ENCODE measurements at regions of chr5 and their contacts with region 1.

Region 1: DNA sequence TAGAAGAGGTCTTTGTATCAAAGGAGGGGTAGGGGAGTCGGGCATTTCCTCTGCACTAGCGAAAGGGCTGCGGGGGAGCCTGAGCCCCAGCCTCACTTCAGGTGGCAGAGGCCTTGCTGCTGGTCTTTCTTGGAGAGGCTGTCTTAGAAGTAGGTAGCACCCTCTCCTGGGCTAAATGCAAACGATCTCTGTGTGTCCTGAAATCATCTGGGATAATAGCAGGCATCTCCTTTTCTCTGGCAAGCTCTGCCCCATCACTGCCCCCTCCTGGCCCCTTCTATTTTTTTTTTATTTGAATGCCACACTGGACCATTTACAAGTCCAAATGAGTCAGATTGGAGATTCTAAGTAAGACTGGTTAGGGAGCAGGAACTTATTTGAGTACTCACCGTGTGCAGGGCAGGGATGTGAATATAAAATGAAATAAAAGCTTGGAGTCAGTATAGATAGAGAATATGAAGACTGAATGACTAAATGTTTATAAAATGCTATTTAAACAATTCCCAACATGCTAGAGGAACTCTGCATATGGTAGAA is 137.1 kb downstream of the FGF1 start:
- DNase-seq: peak; percentile 53
- ATAC-seq: peak; percentile 90 to 92

Region 2: GRCh38 chr5:141992349-141992963 is 556.4 kb before region 1 on chr5:
- intact Hi-C with region 1: loop called in 1 of 2 experiments (anchors 10 kb)
- DNase-seq: peak; percentile 75
- ATAC-seq: peak; percentile 71 to 74

Region 3: DNA sequence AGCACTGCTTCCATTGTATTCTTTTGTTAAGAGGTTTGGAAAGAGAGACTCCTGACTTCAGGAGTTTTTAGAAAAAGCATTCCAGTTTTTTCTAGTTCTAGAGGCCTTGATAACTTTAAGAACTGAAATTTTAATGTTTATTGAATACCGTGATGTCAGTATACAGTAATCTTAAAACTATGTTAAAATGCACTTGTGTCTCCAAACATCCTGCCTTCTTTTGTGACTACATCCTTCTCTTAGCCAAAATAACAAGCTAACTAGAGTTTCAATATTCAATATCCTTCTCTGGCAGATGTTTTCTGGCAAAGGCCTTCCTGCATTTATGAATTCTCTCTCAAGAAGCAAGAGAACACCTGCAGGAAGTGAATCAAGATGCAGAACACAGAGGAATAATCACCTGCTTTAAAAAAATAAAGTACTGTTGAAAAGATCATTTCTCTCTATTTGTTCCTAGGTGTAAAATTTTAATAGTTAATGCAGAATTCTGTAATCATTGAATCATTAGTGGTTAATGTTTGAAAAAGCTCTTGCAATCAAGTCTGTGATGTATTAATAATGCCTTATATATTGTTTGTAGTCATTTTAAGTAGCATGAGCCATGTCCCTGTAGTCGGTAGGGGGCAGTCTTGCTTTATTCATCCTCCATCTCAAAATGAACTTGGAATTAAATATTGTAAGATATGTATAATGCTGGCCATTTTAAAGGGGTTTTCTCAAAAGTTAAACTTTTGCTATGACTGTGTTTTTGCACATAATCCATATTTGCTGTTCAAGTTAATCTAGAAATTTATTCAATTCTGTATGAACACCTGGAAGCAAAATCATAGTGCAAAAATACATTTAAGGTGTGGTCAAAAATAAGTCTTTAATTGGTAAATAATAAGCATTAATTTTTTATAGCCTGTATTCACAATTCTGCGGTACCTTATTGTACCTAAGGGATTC is 397.1 kb before region 1 on chr5:
- intact Hi-C with region 1: loop called (anchors 2 to 5 kb)
- DNase-seq: peak; percentile 44
- ATAC-seq: peak; percentile 60 to 61

Region 4: GRCh38 chr5:142263346-142263745 is 285.5 kb before region 1 on chr5:
- intact Hi-C with region 1: no loop called
- DNase-seq: no peak
- ATAC-seq: no peak

Region 5: DNA sequence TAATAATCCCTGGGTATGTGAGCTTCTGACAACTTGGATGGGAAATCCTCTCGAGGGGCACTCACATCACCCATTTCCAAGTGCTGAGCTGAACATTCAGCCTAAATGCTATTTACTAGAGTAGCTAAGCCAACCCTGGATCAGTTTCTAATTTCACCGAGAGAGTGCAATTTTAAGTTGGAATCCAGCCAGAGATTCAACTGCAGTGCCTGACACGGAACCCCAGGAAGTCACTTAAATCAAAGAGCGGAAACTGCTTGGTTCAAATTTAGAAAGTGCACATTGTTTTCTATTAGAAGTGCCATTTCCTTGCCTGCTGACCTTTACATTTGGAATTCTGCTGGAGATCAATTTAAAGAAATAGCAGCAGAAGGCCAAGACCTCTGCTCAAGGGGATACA is 232.8 kb before region 1 on chr5:
- intact Hi-C with region 1: loop called (anchors 5 to 10 kb)
- DNase-seq: no peak
- ATAC-seq: peak; percentile 19 to 47

Region 6: GRCh38 chr5:142324871-142325724 is 223.7 kb before region 1 on chr5 and contains the start of gene SPRY4:
- intact Hi-C with region 1: loop called in 1 of 2 experiments (anchors 10 kb)
- DNase-seq: peak; percentile 95
- ATAC-seq: peak; percentile 82 to 85
- total RNA-seq, gene SPRY4: 13.3 to 30.6 TPM